HEK293T (cell line): ENCODE measurements at regions of chr17 and their contacts with region 1.

Region 1: DNA sequence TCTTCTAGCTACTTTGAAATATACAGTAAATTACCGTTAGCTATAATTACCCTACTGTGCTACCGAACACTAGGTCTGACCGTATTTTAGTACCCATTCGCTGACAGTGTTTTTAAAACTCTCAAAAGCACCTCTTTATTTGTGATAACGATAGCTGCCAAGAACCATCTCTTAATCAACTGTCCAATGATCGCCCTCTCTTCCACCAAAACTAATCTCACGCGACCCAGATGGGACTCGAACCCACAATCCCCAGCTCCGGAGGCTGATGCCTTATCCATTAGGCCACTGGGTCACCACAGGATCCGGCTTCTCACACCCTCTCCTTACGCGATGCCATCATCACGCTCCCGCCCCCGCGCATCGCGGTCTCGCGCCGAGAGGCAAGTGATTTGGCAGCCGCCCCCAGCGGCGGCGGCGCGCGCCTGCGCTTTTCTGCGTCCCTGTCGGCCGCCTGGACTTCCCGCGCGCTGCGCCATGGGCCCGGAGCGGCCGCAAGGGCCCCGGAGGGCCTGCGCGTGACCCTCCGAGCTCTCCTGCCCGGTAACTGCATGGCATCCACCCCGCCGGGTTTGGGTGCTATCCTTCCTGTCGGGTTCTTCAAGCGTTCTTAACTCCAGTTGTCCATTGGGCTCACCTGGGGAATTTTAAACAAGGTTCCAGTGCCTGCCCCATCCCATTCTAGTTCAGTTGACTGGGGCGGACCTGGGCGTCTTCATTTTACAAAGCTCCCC is 15.7 kb upstream of the KPNA2 start:
- DNase-seq: peak; percentile 98

Region 2: GRCh38 chr17:67993596-67994361 is 26.1 kb before region 1 on chr17:
- CTCF ChIA-PET with region 1: interaction called, 3 read pairs
- POLR2A ChIA-PET with region 1: interaction called, 12 read pairs
- DNase-seq: peak; percentile 84

Region 3: DNA sequence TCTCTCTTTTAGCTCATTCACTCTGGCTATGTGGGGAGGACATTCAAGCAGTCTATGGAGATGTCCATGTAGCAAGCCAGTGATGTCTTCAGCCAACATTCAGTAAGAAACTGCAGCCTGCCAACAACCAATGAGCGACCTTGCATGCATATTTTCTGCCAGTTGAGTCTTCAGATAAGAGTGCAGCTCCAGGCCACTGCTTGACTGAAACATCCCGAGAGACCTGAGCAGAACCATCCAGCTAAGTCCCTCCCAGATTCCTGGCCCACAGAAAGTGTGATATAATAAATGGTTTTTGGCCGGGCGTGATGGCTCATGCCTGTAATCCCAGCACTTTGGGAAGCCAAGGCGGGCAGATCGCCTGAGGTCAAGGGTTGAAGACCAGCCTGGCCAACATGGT is 13.0 kb before region 1 on chr17:
- CTCF ChIA-PET with region 1: interaction called, 10 read pairs
- POLR2A ChIA-PET with region 1: interaction called, 6 read pairs
- DNase-seq: no peak

Region 4: GRCh38 chr17:68035523-68036303 is 15.9 kb after region 1 on chr17 and contains the start of gene KPNA2:
- CTCF ChIA-PET with region 1: interaction called, 7 read pairs
- POLR2A ChIA-PET with region 1: interaction called, 35 read pairs
- DNase-seq: peak; percentile 94